IMR-90 (cell line): ENCODE measurements at regions of chr14 and their contacts with region 1.

Region 1: GRCh38 chr14:101964297-101965144 is at the start of gene DYNC1H1:
- DNase-seq: peak; percentile 94
- ATAC-seq: peak; percentile 86
- H3K4me3 ChIP-seq: peak within 1 kb of the TSS; percentile 99
- H3K27ac ChIP-seq: peak within 1 kb of the TSS; percentile 95
- H3K4me1 ChIP-seq: peaks cover 11% of the 10 kb centered on the region
- H3K27me3 ChIP-seq: no peaks in the 10 kb centered on the region
- CTCF ChIP-seq: no peak
- POLR2A ChIP-seq: peak; percentile 97
- RAD21 ChIP-seq: no peak
- total RNA-seq, gene DYNC1H1: 612 and 670 TPM in 2 replicates

Region 2: DNA sequence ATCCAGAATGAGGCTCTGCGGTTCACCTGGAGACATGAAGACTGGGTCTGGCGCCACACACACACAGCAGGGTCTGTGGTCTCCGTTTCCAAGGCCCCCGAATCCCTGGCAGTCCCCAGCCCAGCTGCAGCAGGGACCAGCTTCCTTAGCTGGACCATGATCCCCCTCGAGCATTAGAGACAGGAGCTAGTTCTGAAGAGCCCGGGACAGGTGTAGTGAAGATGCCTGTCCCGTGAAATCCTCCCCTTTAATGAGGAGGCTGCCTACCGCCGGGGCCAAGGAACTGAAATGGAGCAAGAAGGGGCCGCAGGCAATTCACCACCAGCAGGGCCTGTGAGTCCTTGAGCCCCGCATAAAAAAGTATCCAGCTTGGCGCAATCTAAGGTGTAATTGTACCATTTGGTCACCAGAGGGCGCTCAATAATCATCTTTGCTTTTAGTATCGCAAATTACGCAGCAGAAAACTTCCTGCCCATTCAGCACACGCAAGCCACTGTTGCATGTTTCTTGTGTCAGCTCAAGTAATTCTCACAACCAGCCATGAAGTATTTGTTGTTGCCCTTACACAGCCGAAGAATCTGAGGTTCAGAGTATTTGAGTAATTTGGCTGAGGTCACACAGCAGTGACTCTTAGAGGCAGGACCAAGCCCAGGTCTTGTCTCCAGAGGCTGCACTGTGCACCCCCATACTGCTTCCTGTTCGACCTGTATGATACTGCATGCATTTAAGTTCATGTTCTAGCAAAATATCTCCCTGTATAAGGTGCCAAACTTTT is 257.3 kb before region 1 on chr14:
- CTCF ChIA-PET with region 1: no interaction called
- POLR2A ChIA-PET with region 1: no interaction called
- dilution Hi-C with region 1: no loop called
- in situ Hi-C with region 1: no loop called
- intact Hi-C with region 1: loop called (anchors 1 kb)
- DNase-seq: peak; percentile 81
- ATAC-seq: peak; percentile 90
- H3K4me3 ChIP-seq: no peak overlapping the region
- H3K27ac ChIP-seq: no peak overlapping the region
- H3K4me1 ChIP-seq: 0 out of 2 replicates have a peak, but pooled peaks cover 1% of the 10 kb centered on the region
- H3K27me3 ChIP-seq: peaks cover 19% of the 10 kb centered on the region
- CTCF ChIP-seq: peak; percentile 84
- POLR2A ChIP-seq: no peak
- RAD21 ChIP-seq: peak; percentile 91

Region 3: GRCh38 chr14:101774006-101774795 is 190.3 kb before region 1 on chr14:
- CTCF ChIA-PET with region 1: interaction called, 3 read pairs
- POLR2A ChIA-PET with region 1: no interaction called
- dilution Hi-C with region 1: no loop called
- in situ Hi-C with region 1: loop called (anchors 5 kb)
- intact Hi-C with region 1: loop called (anchors 5 kb)
- DNase-seq: no peak
- ATAC-seq: no peak
- H3K4me3 ChIP-seq: no peak overlapping the region
- H3K27ac ChIP-seq: no peak overlapping the region
- H3K4me1 ChIP-seq: no peaks in the 10 kb centered on the region; the same call in 1 of the 2 replicates
- H3K27me3 ChIP-seq: peaks cover 3% of the 10 kb centered on the region; the same call in 1 of the 2 replicates
- CTCF ChIP-seq: no peak
- POLR2A ChIP-seq: no peak
- RAD21 ChIP-seq: no peak

Region 4: GRCh38 chr14:102086972-102087761 is 122.6 kb after region 1 on chr14 and contains the start of gene HSP90AA1:
- CTCF ChIA-PET with region 1: no interaction called
- POLR2A ChIA-PET with region 1: no interaction called
- dilution Hi-C with region 1: no loop called
- in situ Hi-C with region 1: no loop called
- intact Hi-C with region 1: loop called (anchors 1 kb)
- DNase-seq: peak; percentile 88
- ATAC-seq: peak; percentile 87
- H3K4me3 ChIP-seq: peak within 1 kb of the TSS; percentile 87
- H3K27ac ChIP-seq: peak within 1 kb of the TSS; percentile 96
- H3K4me1 ChIP-seq: peaks cover 10% of the 10 kb centered on the region
- H3K27me3 ChIP-seq: no peaks in the 10 kb centered on the region
- CTCF ChIP-seq: 0 out of 2 replicates have a peak, but pooled peaks have one; percentile 14
- POLR2A ChIP-seq: peak; percentile 99
- RAD21 ChIP-seq: 0 out of 2 replicates have a peak, but pooled peaks have one; percentile 5
- total RNA-seq, gene HSP90AA1: 578 and 1,483 TPM in 2 replicates

Region 5: DNA sequence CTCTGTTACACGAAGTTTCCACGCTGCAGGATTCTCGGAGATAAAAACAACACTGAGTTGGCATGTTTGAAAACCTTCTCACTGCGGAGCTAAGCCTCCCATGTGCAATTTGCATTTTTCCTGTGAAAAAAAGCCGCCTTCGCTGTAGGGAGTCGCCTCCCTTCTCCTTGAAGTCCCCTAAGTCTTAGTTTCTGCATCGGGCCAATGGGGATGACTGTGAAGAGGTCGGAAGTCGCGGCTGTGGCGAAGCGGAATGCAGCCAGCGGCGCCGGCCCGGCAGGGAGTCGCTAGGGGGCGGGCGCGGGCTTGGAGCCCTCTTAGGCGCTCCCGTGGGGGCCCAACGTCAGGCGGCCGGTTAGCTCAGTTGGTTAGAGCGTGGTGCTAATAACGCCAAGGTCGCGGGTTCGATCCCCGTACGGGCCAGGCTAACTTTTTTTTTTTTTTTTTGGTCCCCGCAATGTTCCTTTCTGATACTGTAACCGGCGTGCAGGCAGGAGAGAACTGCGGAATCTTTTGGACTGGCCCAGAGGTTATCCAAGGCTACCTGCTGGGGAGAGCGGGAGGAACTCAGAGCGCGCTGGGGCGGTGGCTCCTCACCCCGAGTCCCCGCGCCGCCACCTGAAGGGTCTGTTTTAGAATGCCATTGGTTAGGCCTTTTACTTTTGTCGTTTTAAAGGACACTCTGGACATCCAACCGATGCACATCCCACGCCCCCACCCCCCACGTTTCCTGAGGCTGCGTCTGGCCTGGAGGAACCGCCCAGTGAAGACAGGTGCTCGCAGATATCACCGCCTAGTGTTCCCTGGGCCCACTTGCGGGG is 352.4 kb after region 1 on chr14:
- CTCF ChIA-PET with region 1: no interaction called
- POLR2A ChIA-PET with region 1: no interaction called
- dilution Hi-C with region 1: no loop called
- in situ Hi-C with region 1: loop called (anchors 25 kb)
- intact Hi-C with region 1: loop called (anchors 1 kb)
- DNase-seq: peak; percentile 91
- ATAC-seq: peak; percentile 71
- H3K4me3 ChIP-seq: peak overlapping the region; percentile 54
- H3K27ac ChIP-seq: peak overlapping the region; percentile 49
- H3K4me1 ChIP-seq: peaks cover 15% of the 10 kb centered on the region
- H3K27me3 ChIP-seq: no peaks in the 10 kb centered on the region
- CTCF ChIP-seq: peak; percentile 83
- POLR2A ChIP-seq: no peak
- RAD21 ChIP-seq: no peak